PC-9 (cell line): ENCODE measurements at regions of chr10 and their contacts with region 1.

Region 1: GRCh38 chr10:114839901-114840300 is 18.3 kb downstream of the FHIP2A start:
- DNase-seq: no peak
- H3K4me3 ChIP-seq: no peak overlapping the region
- H3K27ac ChIP-seq: no peak overlapping the region
- H3K4me1 ChIP-seq: no peaks in the 10 kb centered on the region
- H3K27me3 ChIP-seq: no peaks in the 10 kb centered on the region
- CTCF ChIP-seq: no peak

Region 2: DNA sequence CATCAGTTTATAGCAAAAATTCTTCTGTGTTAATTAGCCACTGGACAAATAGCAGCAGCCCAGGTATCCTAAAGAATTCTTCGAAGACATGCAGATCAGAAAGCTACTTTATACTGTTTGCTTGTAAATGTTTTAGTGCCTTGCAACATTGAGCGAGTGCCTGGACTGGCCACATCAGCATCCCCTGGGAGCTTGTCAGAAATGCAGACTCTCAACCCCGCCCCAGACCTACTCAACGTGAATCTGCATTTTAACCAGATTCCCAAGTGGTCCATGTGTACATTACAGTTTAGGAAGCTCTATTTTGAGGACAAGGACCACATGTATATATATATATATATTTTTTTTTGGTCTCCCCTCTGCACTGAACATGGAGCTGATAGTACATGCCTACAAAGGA is 1106.9 kb before region 1 on chr10:
- CTCF ChIA-PET with region 1: no interaction called
- POLR2A ChIA-PET with region 1: no interaction called
- intact Hi-C with region 1: no loop called
- DNase-seq: no peak
- H3K4me3 ChIP-seq: no peak overlapping the region
- H3K27ac ChIP-seq: no peak overlapping the region
- H3K4me1 ChIP-seq: no peaks in the 10 kb centered on the region
- H3K27me3 ChIP-seq: no peaks in the 10 kb centered on the region
- CTCF ChIP-seq: no peak

Region 3: GRCh38 chr10:114869520-114869892 is 29.6 kb after region 1 on chr10:
- CTCF ChIA-PET with region 1: no interaction called
- POLR2A ChIA-PET with region 1: interaction called, 10 read pairs
- intact Hi-C with region 1: no loop called
- DNase-seq: no peak
- H3K4me3 ChIP-seq: no peak overlapping the region
- H3K27ac ChIP-seq: no peak overlapping the region
- H3K4me1 ChIP-seq: peaks cover 8% of the 10 kb centered on the region
- H3K27me3 ChIP-seq: no peaks in the 10 kb centered on the region
- CTCF ChIP-seq: no peak